CD14-positive monocyte (primary cell): ENCODE measurements at regions of chr1 and their contacts with region 1.

Region 1: DNA sequence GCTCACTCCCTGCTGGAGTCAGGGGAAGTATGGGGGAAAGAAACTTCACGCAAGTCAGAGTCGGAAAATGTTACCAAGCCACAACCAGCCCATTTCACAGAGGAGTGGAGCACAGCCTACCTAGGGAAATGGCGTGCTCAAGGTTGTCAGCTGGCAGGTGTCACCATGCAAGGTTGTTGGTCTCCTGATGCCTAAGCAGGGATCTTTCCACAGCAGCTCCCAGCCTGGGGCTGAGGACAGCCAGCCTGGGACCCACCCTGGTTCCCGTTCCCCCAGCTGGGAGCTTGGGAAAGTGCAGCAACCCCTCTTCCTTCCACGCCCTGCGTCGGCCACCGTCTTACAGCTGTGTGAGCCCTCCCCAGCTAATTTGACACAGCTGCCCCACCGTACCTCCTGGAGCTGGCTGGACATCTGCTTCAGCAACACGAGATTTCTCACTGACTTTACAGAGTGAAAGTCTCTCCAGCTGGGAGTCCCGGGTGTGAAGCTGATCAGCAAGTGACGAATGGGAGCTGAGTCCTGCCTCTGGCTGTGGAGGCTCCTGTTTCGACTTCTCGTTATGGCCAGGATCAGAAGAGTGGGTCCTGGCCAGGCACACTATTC is 224.6 kb upstream of the RAB4A start:
- DNase-seq: no peak
- H3K4me3 ChIP-seq: no peak overlapping the region
- H3K4me3 Mint-ChIP-seq: no peak overlapping the region
- H3K27ac ChIP-seq: no peak overlapping the region
- H3K27ac Mint-ChIP-seq: no peak overlapping the region
- H3K4me1 ChIP-seq: peaks cover 18 to 34% of the 10 kb centered on the region in 2 donors
- H3K4me1 Mint-ChIP-seq: peaks cover 42% of the 10 kb centered on the region
- H3K27me3 ChIP-seq: no peaks in the 10 kb centered on the region
- H3K27me3 Mint-ChIP-seq: peaks cover 0 to 2% (median 0%) of the 10 kb centered on the region in 3 donors
- CTCF ChIP-seq: no peak

Region 2: GRCh38 chr1:228998179-228998578 is 48.2 kb before region 1 on chr1:
- intact Hi-C with region 1: loop called in 1 of 2 experiments (anchors 5 kb)
- DNase-seq: peak in 1 of 3 donors; percentile 29
- H3K4me3 ChIP-seq: no peak overlapping the region
- H3K4me3 Mint-ChIP-seq: peak overlapping the region in 1 of 2 donors; percentile 37
- H3K27ac ChIP-seq: no peak overlapping the region
- H3K27ac Mint-ChIP-seq: peak overlapping the region in 5 of 7 donors; percentile 8 to 74 (median 34)
- H3K4me1 ChIP-seq: peaks cover 20 to 28% of the 10 kb centered on the region in 2 donors
- H3K4me1 Mint-ChIP-seq: peaks cover 53% of the 10 kb centered on the region
- H3K27me3 ChIP-seq: no peaks in the 10 kb centered on the region
- H3K27me3 Mint-ChIP-seq: peaks cover 0 to 3% (median 0%) of the 10 kb centered on the region in 3 donors
- CTCF ChIP-seq: no peak